ENCODE measurements at regions of chr1 and their contacts with region 1.

Region 1: GRCh38 chr1:147494998-147495580 is 46.2 kb upstream of the BCL9 start:
- DNase-seq: peak; percentile 77 to 83
- H3K4me3 ChIP-seq: no peak overlapping the region
- H3K27ac ChIP-seq: peak overlapping the region; percentile 13 to 39
- H3K4me1 ChIP-seq: no peaks in the 10 kb centered on the region
- H3K27me3 ChIP-seq: no peaks in the 10 kb centered on the region
- CTCF ChIP-seq: peak; percentile 93 to 97 (median 94)
- POLR2A ChIP-seq: no peak

Region 2: GRCh38 chr1:147627435-147628110 is 132.5 kb after region 1 on chr1:
- intact Hi-C with region 1: loop called (anchors 5 kb)
- DNase-seq: peak; percentile 43 to 58
- H3K4me3 ChIP-seq: no peak overlapping the region
- H3K27ac ChIP-seq: peak overlapping the region in 1 of 2 donors; percentile 30
- H3K4me1 ChIP-seq: no peaks in the 10 kb centered on the region
- H3K27me3 ChIP-seq: no peaks in the 10 kb centered on the region
- CTCF ChIP-seq: peak; percentile 69 to 86 (median 82)
- POLR2A ChIP-seq: no peak

Region 3: GRCh38 chr1:147640553-147641165 is 145.6 kb after region 1 on chr1:
- intact Hi-C with region 1: loop called (anchors 5 kb)
- DNase-seq: peak; percentile 54 to 58
- H3K4me3 ChIP-seq: no peak overlapping the region
- H3K27ac ChIP-seq: no peak overlapping the region
- H3K4me1 ChIP-seq: peaks cover 0 to 5% of the 10 kb centered on the region in 2 donors
- H3K27me3 ChIP-seq: no peaks in the 10 kb centered on the region
- CTCF ChIP-seq: peak; percentile 27 to 63 (median 46)
- POLR2A ChIP-seq: no peak

Measured in uterus (tissue), 4 donors.